Mammary epithelial cell (primary cell): ENCODE measurements at regions of chr12 and their contacts with region 1.

Region 1: DNA sequence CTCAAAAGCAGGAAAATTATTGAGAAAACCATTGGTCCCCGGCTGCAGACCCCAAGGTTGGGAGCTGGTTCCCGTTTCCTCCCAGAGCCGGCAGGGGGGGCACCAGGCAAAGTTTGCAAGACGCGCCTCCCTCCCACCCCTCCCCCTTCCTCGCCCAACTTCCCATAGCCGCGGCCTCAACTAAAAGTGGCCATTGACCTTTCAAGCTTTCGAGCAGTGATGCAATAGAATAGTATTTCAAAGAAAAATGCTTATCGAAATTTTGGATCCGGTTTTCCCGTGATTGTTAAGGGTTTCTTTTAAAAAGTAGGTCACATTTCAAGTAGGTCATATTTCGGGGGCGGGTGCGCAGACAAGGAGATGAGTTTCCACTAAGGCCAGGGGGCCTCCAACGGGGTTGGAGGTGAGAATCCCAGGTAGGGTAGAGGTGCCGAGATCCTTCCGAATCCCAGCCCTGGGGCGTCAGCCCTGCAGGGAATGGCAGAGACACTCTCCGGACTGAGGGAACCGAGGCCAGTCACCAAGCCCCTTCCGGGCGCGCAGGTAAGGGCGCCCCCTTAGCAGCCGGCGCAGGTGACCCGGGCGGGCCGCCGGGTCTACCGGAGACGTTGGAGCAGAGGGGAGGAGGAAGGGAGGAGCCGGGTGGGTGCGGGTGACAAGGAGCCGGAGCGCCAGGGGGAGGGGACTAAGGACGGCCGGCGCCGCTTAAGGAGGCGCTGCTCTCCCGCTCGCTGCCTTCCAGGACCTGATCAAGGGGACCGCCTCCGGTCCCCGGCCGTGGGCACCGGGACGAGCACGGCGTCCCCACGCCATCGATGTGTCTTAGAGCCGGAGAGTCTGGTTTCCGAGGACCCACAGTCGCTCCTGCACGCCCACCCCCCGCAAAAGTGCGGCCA is 2.6 kb upstream of the SOCS2 start:
- DNase-seq: peak; percentile 72
- H3K4me3 ChIP-seq: peak overlapping the region; percentile 74 to 97 (median 84)
- H3K27ac ChIP-seq: peak overlapping the region; percentile 56
- H3K4me1 ChIP-seq: peaks cover 13% of the 10 kb centered on the region
- H3K27me3 ChIP-seq: no peaks in the 10 kb centered on the region
- CTCF ChIP-seq: peak; percentile 46 to 88

Region 2: DNA sequence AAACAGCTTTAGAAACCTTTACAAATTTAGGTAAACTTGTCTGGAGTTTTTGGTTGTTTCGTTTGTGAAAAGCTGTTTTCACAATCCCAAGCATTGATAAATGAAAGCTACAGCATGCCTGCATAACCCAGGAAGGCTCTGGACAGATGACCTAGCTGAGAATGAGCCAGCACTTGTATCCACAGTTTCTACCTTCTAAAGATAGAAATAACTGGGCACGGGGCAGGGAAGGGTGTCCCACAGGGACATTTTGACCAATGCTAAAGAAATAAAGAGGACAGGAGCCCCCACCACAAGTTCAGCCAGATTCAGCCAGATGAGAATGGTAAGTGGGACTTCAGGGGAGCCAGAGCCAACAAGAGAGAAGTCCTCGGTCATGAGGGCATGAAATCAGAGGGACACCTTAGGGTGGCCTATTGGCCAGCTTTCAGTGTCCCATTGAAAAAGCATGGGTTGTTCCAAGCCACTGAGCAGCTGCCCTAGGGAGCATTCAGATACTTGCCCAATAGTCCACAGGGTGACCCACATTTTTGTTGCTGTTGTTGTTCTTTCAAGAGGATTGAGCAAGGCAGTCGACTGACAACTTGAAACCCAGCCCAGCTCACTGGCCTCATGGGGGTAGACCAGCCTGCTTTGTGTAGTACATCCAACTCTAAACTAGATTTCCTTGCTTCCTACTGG is 332.5 kb before region 1 on chr12:
- CTCF ChIA-PET with region 1: no interaction called
- dilution Hi-C with region 1: no loop called
- in situ Hi-C with region 1: no loop called
- intact Hi-C with region 1: no loop called
- DNase-seq: no peak
- H3K4me3 ChIP-seq: no peak overlapping the region
- H3K27ac ChIP-seq: no peak overlapping the region
- H3K4me1 ChIP-seq: peaks cover 2% of the 10 kb centered on the region
- H3K27me3 ChIP-seq: no peaks in the 10 kb centered on the region
- CTCF ChIP-seq: no peak

Region 3: GRCh38 chr12:93378373-93379325 is 191.3 kb before region 1 on chr12:
- CTCF ChIA-PET with region 1: no interaction called
- dilution Hi-C with region 1: no loop called
- in situ Hi-C with region 1: no loop called
- intact Hi-C with region 1: no loop called
- DNase-seq: peak; percentile 66
- H3K4me3 ChIP-seq: peak overlapping the region; percentile 67 to 93 (median 87)
- H3K27ac ChIP-seq: peak overlapping the region; percentile 77
- H3K4me1 ChIP-seq: peaks cover 25% of the 10 kb centered on the region
- H3K27me3 ChIP-seq: no peaks in the 10 kb centered on the region
- CTCF ChIP-seq: no peak

Region 4: GRCh38 chr12:93502802-93503623 is 66.9 kb before region 1 on chr12:
- CTCF ChIA-PET with region 1: no interaction called
- dilution Hi-C with region 1: no loop called
- in situ Hi-C with region 1: no loop called
- intact Hi-C with region 1: loop called (anchors 2 kb)
- DNase-seq: peak; percentile 9
- H3K4me3 ChIP-seq: no peak overlapping the region
- H3K27ac ChIP-seq: no peak overlapping the region
- H3K4me1 ChIP-seq: no peaks in the 10 kb centered on the region
- H3K27me3 ChIP-seq: no peaks in the 10 kb centered on the region
- CTCF ChIP-seq: peak; percentile 74 to 75

Region 5: GRCh38 chr12:93624595-93625294 is 54.8 kb after region 1 on chr12:
- CTCF ChIA-PET with region 1: no interaction called
- dilution Hi-C with region 1: loop called (anchors 5 kb)
- in situ Hi-C with region 1: no loop called
- intact Hi-C with region 1: loop called (anchors 1 kb)
- DNase-seq: peak; percentile 97
- H3K4me3 ChIP-seq: peak overlapping the region in 2 of 3 experiments; percentile 11 to 21
- H3K27ac ChIP-seq: peak overlapping the region; percentile 99
- H3K4me1 ChIP-seq: peaks cover 18% of the 10 kb centered on the region
- H3K27me3 ChIP-seq: no peaks in the 10 kb centered on the region
- CTCF ChIP-seq: no peak

Region 6: GRCh38 chr12:93645702-93646101 is 75.8 kb after region 1 on chr12:
- CTCF ChIA-PET with region 1: no interaction called
- dilution Hi-C with region 1: no loop called
- in situ Hi-C with region 1: no loop called
- intact Hi-C with region 1: no loop called
- DNase-seq: peak; percentile 50
- H3K4me3 ChIP-seq: no peak overlapping the region
- H3K27ac ChIP-seq: no peak overlapping the region
- H3K4me1 ChIP-seq: no peaks in the 10 kb centered on the region
- H3K27me3 ChIP-seq: no peaks in the 10 kb centered on the region
- CTCF ChIP-seq: no peak

Region 7: GRCh38 chr12:93742110-93742934 is 172.4 kb after region 1 on chr12:
- CTCF ChIA-PET with region 1: no interaction called
- dilution Hi-C with region 1: no loop called
- in situ Hi-C with region 1: loop called (anchors 5 to 10 kb)
- intact Hi-C with region 1: loop called (anchors 1 kb)
- DNase-seq: peak; percentile 65
- H3K4me3 ChIP-seq: peak overlapping the region; percentile 55 to 74 (median 60)
- H3K27ac ChIP-seq: peak overlapping the region; percentile 81
- H3K4me1 ChIP-seq: peaks cover 16% of the 10 kb centered on the region
- H3K27me3 ChIP-seq: no peaks in the 10 kb centered on the region
- CTCF ChIP-seq: peak; percentile 12 to 48

Region 8: DNA sequence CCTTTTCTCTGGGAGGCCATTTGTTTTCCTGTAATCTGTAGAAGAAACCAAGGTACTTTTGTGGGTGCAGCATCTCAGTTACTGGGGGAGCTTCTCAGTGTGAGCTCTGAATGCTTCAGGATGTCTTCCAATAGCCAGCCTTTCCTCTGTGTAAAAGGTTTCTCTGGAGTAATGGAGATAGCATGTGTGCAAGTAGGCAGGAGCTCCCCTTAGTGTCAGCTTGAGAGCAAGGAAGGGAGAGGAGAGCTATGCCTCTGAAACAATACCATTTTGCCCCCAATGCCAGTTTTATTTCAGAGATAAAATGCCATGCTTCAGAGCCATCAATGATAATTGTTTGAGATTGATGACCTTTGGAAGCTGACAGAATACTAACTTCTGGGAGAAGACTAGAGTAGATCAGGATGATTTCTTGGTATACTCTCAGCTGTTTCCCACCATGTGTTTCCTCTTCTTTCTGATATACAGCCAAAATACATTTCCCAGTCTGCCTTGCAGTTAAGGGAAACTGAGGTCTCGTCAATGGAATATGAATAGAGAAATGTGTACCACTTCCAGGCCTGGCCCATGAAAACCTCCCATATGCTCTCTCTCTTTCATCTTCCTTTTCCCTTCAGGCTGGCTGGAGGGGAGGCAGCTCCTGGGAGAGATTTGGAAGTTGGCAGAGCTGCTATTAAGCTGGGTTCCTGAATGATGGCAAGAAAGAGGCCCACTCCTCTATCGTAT is 233.0 kb after region 1 on chr12:
- CTCF ChIA-PET with region 1: no interaction called
- dilution Hi-C with region 1: no loop called
- in situ Hi-C with region 1: no loop called
- intact Hi-C with region 1: loop called (anchors 1 kb)
- DNase-seq: no peak
- H3K4me3 ChIP-seq: no peak overlapping the region
- H3K27ac ChIP-seq: no peak overlapping the region
- H3K4me1 ChIP-seq: peaks cover 33% of the 10 kb centered on the region
- H3K27me3 ChIP-seq: no peaks in the 10 kb centered on the region
- CTCF ChIP-seq: peak in 1 of 2 donors; percentile 31

Region 9: DNA sequence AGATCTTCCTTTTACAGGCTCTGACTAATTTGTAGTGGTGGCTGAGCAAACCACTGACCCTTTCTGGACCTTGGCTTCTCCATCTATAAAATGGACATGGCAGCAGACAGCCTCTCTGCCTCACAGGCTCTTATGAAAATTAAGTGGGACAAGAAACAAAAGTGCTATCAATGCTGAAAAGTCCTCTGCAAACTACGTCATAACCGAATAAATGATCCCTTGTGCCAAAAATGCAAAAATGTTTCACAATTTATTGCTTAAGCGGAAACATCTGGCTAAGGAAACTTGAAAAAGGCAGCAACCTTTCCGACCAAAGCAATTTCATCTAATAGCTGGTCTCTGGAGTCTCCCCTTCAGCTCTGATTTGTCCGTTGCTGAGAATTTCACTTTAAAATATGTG is 470.0 kb after region 1 on chr12:
- CTCF ChIA-PET with region 1: no interaction called
- dilution Hi-C with region 1: no loop called
- in situ Hi-C with region 1: no loop called
- intact Hi-C with region 1: no loop called
- DNase-seq: no peak
- H3K4me3 ChIP-seq: no peak overlapping the region
- H3K27ac ChIP-seq: no peak overlapping the region
- H3K4me1 ChIP-seq: no peaks in the 10 kb centered on the region
- H3K27me3 ChIP-seq: peaks cover 2% of the 10 kb centered on the region
- CTCF ChIP-seq: no peak

Region 10: GRCh38 chr12:94074980-94075928 is 505.4 kb after region 1 on chr12:
- CTCF ChIA-PET with region 1: interaction called, 9 read pairs
- dilution Hi-C with region 1: no loop called
- in situ Hi-C with region 1: no loop called
- intact Hi-C with region 1: loop called (anchors 1 kb)
- DNase-seq: peak; percentile 79
- H3K4me3 ChIP-seq: no peak overlapping the region
- H3K27ac ChIP-seq: no peak overlapping the region
- H3K4me1 ChIP-seq: peaks cover 4% of the 10 kb centered on the region
- H3K27me3 ChIP-seq: peaks cover 5% of the 10 kb centered on the region
- CTCF ChIP-seq: peak; percentile 81 to 84